Dendritic cell treated with granulocyte-macrophage colony-stimulating factor and Interleukin-4, amounts not matched to agents 40 ng/mL and 50 ng/mL, for 4 days (primary cell): ENCODE measurements at regions of chr6 and their contacts with region 1.

Region 1: DNA sequence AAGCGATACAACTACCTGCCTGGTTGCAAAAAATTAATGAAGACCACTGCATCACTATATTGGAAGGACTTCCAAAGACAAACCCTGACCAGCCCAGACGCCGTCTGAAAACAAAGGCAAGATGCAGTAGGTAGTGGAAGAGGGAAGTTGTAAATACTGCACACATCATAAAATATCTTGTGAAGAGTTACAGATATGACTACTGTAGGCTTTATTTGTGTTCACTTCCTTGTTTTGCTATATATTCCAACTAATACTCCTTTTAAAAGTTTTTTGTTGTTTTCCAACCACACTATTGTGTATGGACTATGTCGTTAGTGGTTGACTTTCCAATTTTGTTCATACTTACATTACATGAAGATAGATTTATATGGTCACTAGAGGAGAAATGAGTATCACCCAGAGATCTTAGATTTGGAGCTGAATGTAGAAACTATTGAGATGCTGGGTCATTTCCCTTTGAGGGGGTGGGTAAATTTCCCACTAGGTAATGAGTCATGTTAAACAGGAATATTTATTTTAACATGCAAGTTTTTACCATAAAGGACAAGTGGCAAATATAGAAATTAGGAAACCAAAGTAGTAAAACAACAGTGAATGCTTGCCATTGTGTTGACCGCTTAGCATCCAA is 16.6 kb upstream of the TXLNB start:
- H3K4me3 Mint-ChIP-seq: no peak overlapping the region
- H3K27ac Mint-ChIP-seq: peak overlapping the region; percentile 88
- H3K4me1 Mint-ChIP-seq: peaks cover 38% of the 10 kb centered on the region
- H3K27me3 Mint-ChIP-seq: no peaks in the 10 kb centered on the region

Region 2: DNA sequence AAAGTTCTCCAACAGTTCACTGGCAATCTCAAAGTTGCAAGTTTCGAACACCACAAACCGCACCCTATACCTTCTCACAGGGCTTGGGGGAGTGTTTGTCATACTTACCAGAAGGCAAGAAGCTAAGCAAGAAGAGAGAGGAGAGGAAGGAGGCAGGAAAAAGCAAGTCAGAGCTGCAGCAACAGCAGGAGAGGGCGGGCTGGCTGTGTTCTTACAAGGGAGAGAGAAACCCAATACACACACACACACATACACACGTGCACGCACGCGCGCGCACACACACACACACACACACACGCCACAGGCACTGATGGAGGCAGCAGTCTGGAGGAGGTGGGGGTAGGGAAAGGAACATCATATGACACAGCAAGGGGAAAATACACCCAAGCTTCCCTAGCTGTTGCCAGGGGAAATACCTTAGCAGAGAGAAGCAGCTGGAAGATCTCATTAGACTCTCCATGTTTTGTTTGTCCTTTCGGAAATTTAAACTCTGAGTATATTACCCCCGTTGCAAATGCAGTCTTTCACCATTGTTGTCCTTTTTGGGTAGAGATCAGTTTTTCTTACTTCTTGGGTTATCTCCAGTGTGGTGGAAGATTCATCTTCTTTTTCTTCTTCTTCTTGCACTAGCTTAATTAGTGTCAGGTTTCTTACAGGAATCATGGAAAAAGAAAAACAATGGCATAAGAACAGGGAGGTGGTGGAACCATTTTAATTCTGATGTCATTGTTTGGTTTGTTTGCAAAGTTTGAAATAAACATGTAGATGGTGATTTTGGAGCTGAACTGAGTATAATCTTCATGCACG is 16.4 kb before region 1 on chr6 and contains the start of gene TXLNB:
- intact Hi-C with region 1: loop called (anchors 2 kb)
- H3K4me3 Mint-ChIP-seq: peak within 1 kb of the TSS; percentile 46
- H3K27ac Mint-ChIP-seq: peak within 1 kb of the TSS; percentile 94
- H3K4me1 Mint-ChIP-seq: peaks cover 51% of the 10 kb centered on the region
- H3K27me3 Mint-ChIP-seq: no peaks in the 10 kb centered on the region

Region 3: DNA sequence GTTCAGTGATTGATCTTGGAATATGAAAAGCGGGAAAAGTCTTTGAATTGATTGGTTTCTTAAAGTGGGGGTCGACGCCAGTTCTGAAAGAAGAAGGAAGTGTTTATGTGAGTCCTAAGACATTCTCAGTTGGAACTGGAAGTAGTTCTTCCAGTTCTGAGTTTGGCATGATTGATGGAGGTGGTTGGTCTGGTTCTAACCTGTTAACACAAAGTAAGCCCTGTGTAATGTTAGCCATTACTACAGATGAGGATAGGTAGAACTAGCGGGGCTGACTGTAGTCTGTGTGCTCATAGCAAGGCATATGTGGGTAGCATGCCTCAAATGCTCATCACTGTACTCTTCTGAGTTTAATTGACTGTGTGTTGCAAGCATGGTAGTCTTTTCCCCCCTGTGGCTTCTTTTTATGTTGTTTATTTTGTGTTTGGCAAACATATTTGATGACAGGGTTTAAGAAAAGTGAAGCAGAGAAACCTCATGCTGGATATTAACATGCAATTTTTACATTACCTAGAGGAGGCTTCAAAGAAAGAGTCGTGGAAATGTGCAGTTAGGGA is 41.1 kb after region 1 on chr6:
- intact Hi-C with region 1: no loop called
- H3K4me3 Mint-ChIP-seq: no peak overlapping the region
- H3K27ac Mint-ChIP-seq: no peak overlapping the region
- H3K4me1 Mint-ChIP-seq: peaks cover 11% of the 10 kb centered on the region
- H3K27me3 Mint-ChIP-seq: no peaks in the 10 kb centered on the region